GM12878 (cell line): ENCODE measurements at regions of chr7 and their contacts with region 1.

Region 1: GRCh38 chr7:74294191-74294998 is 5.2 kb downstream of the CLIP2 start:
- DNase-seq: no peak
- ATAC-seq: no peak
- H3K4me3 ChIP-seq: peak overlapping the region; percentile 97; the same call in 1 of the 2 replicates
- H3K27ac ChIP-seq: no peak overlapping the region; the same call in 1 of the 2 replicates
- H3K4me1 ChIP-seq: peaks cover 23% of the 10 kb centered on the region
- H3K27me3 ChIP-seq: no peaks in the 10 kb centered on the region
- CTCF ChIP-seq: no peak
- EP300 ChIP-seq: no peak
- POLR2A ChIP-seq: no peak
- RAD21 ChIP-seq: no peak

Region 2: GRCh38 chr7:74212656-74213055 is 81.7 kb before region 1 on chr7:
- CTCF ChIA-PET with region 1: interaction called, 93 read pairs
- POLR2A ChIA-PET with region 1: interaction called, 21 read pairs
- RAD21 ChIA-PET with region 1: interaction called, 41 read pairs
- SMC1A ChIA-PET with region 1: interaction called, 21 read pairs
- in situ Hi-C with region 1: loop called (anchors 5 kb)
- intact Hi-C with region 1: loop called (anchors 5 kb)
- DNase-seq: no peak
- ATAC-seq: no peak
- H3K4me3 ChIP-seq: peak overlapping the region; percentile 96
- H3K27ac ChIP-seq: peak overlapping the region; percentile 94
- H3K4me1 ChIP-seq: peaks cover 38% of the 10 kb centered on the region
- H3K27me3 ChIP-seq: no peaks in the 10 kb centered on the region
- CTCF ChIP-seq: no peak
- EP300 ChIP-seq: no peak
- POLR2A ChIP-seq: peak; percentile 49; the same call in 1 of the 2 replicates
- RAD21 ChIP-seq: no peak

Region 3: GRCh38 chr7:74254129-74254857 is 40.1 kb before region 1 on chr7 and contains the start of gene RFC2:
- CTCF ChIA-PET with region 1: interaction called, 10 read pairs
- POLR2A ChIA-PET with region 1: interaction called, 4 read pairs
- RAD21 ChIA-PET with region 1: interaction called, 6 read pairs
- SMC1A ChIA-PET with region 1: interaction called, 15 read pairs
- in situ Hi-C with region 1: no loop called
- intact Hi-C with region 1: loop called (anchors 1 kb)
- DNase-seq: peak; percentile 96
- ATAC-seq: peak; percentile 94
- H3K4me3 ChIP-seq: peak within 1 kb of the TSS; percentile 86
- H3K27ac ChIP-seq: peak within 1 kb of the TSS; percentile 88
- H3K4me1 ChIP-seq: peaks cover 33% of the 10 kb centered on the region
- H3K27me3 ChIP-seq: no peaks in the 10 kb centered on the region
- CTCF ChIP-seq: peak in 1 of 3 experiments; percentile 17; a peak in 1 of 6 replicates
- EP300 ChIP-seq: peak; percentile 19 to 45; a peak in 2 of 4 replicates
- POLR2A ChIP-seq: peak; percentile 96
- RAD21 ChIP-seq: no peak
- polyA plus RNA-seq, gene RFC2: 25.8 to 45.2 TPM

Region 4: DNA sequence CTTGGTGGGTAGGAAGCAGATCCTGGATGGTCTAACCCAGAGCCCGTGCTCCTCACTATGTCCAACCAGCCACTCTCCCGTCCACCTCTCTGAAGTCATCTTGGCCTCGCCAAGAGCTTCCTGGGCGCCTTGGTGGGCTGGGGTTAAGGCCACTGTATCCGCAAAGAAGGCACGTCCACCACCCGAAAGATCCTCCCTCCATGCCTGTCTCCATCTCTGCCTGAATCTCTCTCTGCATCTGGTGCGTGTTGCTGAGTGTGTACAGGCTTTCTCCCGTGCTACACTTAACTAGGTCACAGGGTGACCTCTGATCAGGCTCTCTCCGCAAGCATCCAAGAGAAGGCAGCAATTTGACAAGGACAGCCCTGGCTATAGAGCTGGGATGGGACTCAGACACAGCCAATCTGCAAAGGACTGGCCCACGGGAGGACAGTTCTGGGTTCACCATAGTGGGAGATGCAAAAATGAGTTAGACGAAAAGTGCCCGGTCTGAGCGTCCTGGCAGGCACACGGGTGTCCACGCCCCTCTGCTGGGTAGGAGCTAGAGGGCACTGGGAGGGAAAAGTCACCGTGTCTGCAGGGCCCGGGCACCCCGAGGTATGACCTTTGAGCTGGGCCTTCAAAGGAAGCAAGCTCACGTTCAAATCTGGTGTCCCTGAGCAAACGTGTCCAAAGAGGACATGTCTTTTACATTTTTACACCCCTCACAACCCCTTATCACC is 30.8 kb before region 1 on chr7:
- CTCF ChIA-PET with region 1: interaction called, 9 read pairs
- POLR2A ChIA-PET with region 1: interaction called, 171 read pairs
- RAD21 ChIA-PET with region 1: interaction called, 169 read pairs
- SMC1A ChIA-PET with region 1: interaction called, 285 read pairs
- in situ Hi-C with region 1: no loop called
- intact Hi-C with region 1: no loop called
- DNase-seq: no peak
- ATAC-seq: no peak
- H3K4me3 ChIP-seq: no peak overlapping the region
- H3K27ac ChIP-seq: no peak overlapping the region
- H3K4me1 ChIP-seq: peaks cover 33% of the 10 kb centered on the region
- H3K27me3 ChIP-seq: no peaks in the 10 kb centered on the region
- CTCF ChIP-seq: no peak
- EP300 ChIP-seq: no peak
- POLR2A ChIP-seq: no peak
- RAD21 ChIP-seq: no peak